ENCODE measurements at regions of chr1 and their contacts with region 1.

Region 1: DNA sequence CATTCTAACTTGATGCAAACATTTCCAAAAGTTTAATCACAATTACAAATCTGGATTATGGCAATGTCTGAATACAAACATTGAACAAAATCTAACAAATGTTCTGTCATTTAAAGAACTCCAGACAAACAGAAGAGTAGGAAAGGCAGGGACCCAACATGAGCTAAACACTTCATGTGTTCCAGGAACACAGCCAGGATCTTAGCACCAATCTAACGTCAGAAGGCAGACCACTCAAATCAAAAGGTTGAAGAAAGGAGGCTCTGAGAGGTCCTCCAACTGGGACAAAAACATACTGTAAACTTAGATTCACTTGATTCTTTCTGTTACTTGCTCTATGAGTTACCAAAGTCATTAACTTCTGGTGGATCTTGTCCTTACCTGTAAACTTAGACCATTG is 374.0 kb downstream of the NEGR1 start:
- DNase-seq: no peak
- H3K4me3 Mint-ChIP-seq: no peak overlapping the region
- H3K27ac Mint-ChIP-seq: no peak overlapping the region
- H3K4me1 Mint-ChIP-seq: no peaks in the 10 kb centered on the region
- H3K27me3 Mint-ChIP-seq: no peaks in the 10 kb centered on the region
- CTCF ChIP-seq: no peak

Region 2: DNA sequence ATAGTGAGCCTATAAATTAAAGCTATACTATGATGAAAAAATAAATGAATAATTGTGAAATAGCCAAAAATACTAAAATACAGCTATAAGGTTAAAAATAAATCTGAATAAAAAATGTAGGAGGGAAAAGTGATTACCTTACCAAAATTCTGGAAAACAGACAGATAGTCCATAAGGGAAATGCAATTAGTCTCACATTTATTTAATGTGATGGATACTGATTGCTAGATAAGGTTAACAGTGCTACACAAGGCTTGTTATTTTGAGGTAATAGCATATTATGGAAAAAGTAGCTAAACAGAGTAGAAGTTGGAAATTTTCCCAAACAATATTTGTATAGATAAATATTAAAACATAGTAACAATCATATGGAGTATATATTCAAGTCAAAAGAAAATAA is 39.0 kb before region 1 on chr1:
- CTCF ChIA-PET with region 1: no interaction called
- POLR2A ChIA-PET with region 1: no interaction called
- intact Hi-C with region 1: no loop called
- DNase-seq: no peak
- H3K4me3 Mint-ChIP-seq: no peak overlapping the region
- H3K27ac Mint-ChIP-seq: no peak overlapping the region
- H3K4me1 Mint-ChIP-seq: no peaks in the 10 kb centered on the region
- H3K27me3 Mint-ChIP-seq: no peaks in the 10 kb centered on the region
- CTCF ChIP-seq: no peak

Region 3: GRCh38 chr1:71881611-71882010 is 26.7 kb before region 1 on chr1:
- CTCF ChIA-PET with region 1: interaction called, 3 read pairs
- POLR2A ChIA-PET with region 1: no interaction called
- intact Hi-C with region 1: loop called (anchors 1 kb)
- DNase-seq: no peak
- H3K4me3 Mint-ChIP-seq: no peak overlapping the region
- H3K27ac Mint-ChIP-seq: no peak overlapping the region
- H3K4me1 Mint-ChIP-seq: no peaks in the 10 kb centered on the region
- H3K27me3 Mint-ChIP-seq: no peaks in the 10 kb centered on the region
- CTCF ChIP-seq: no peak

Measured in MCF 10A (cell line).